ENCODE measurements at regions of chr2 and their contacts with region 1.

Region 1: GRCh38 chr2:160367887-160368286 is 125.7 kb downstream of the RBMS1 start:
- DNase-seq: no peak
- ATAC-seq: peak; percentile 76
- H3K4me3 ChIP-seq: no peak overlapping the region
- H3K4me3 Mint-ChIP-seq: peak overlapping the region; percentile 10 to 76 (median 62)
- H3K27ac ChIP-seq: no peak overlapping the region
- H3K27ac Mint-ChIP-seq: peak overlapping the region in 8 of 9 donors; percentile 2 to 77 (median 44)
- H3K4me1 ChIP-seq: peaks cover 34% of the 10 kb centered on the region in 2 donors
- H3K4me1 Mint-ChIP-seq: peaks cover 45 to 96% (median 84%) of the 10 kb centered on the region in 7 donors
- H3K27me3 ChIP-seq: no peaks in the 10 kb centered on the region
- H3K27me3 Mint-ChIP-seq: no peaks in the 10 kb centered on the region

Region 2: DNA sequence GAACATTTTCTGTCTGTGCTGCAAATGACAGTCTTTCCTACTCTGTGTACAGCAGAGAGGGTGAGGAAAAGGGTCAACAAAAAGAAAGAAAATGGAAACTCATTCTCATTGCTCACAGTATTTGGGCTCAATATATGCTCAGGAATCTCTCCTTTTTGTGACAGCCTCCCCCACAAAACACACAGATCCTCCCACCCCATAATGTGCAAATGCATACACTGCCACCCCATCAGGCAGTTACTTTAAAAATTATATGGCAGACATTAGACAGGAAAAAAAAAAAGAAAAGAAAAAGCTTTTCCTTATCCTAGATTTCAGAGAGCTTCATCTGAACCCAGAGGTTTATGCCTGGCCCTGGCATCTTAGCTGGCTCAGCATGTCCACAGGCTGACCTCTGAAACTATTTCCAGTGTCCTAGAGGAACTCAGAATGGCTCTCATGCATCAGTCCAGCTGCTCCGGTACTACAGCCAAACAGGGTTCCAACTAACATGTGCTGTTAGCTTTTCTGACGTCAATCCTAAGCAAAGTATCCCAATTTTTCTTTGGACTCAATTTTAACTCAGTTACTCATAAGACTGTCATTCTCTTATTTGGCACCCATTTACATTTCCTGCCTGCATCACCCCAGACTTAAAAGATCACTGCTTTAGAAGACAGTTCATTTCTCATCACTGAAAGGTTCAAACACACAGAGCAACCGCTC is 19.8 kb after region 1 on chr2:
- CTCF ChIA-PET with region 1: no interaction called
- POLR2A ChIA-PET with region 1: no interaction called
- intact Hi-C with region 1: loop called in 1 of 2 experiments (anchors 2 kb)
- DNase-seq: no peak
- ATAC-seq: peak; percentile 21
- H3K4me3 ChIP-seq: no peak overlapping the region
- H3K4me3 Mint-ChIP-seq: peak overlapping the region; percentile 60 to 78 (median 74)
- H3K27ac ChIP-seq: no peak overlapping the region
- H3K27ac Mint-ChIP-seq: peak overlapping the region; percentile 53 to 89 (median 81)
- H3K4me1 ChIP-seq: peaks cover 50 to 53% of the 10 kb centered on the region in 2 donors
- H3K4me1 Mint-ChIP-seq: peaks cover 11 to 96% (median 66%) of the 10 kb centered on the region in 7 donors
- H3K27me3 ChIP-seq: no peaks in the 10 kb centered on the region
- H3K27me3 Mint-ChIP-seq: no peaks in the 10 kb centered on the region

Measured in naive thymus-derived CD4-positive, alpha-beta T cell (primary cell).